Left colon (tissue), 2 donors: ENCODE measurements at regions of chr6 and their contacts with region 1.

Region 1: GRCh38 chr6:150037526-150038201 is 12.3 kb upstream of the RAET1L start:
- DNase-seq: no peak
- ATAC-seq: no peak

Region 2: DNA sequence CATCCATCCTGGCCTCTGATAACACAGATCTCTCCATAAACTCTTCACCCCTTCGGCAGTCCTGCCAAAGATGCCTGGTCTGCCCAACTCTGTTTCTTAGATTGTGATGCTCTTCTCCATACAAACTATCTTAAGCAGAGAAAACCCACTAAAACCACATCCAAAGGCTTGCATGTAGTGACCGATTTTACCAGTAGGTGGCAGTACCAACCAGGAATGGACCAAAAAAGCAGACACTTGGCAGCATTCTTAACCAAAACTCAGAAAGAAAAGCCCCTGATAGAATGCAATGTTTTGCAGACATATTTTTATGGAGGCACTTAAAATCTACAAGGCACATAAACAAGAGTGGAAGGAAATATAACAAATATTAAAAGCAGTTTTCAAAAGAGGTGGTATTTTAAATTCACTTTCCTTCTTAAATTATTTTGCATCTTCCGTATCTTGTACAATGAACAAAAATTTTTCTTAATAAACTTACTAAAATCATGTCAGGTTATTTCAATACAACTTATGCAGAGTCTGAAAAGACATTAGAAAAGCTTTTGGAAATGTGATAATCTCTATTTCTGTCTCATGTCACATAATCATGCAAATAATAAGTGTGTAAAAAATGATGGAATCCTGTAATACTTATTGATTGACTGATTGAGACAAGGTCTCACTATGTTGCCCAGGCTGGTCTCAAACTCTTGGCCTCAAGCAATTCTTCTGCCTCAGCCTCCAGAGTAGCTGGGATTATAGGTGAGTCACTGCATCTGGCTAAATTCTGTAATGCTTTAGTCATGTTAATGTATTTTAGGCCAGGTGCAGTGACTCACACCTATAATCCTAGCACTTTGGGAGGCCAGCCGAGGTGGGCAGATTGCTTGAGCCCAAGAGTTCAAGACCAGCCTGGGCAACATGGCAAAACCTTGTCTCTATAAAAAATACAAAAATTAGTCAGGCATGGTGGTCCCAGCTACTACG is 202.9 kb before region 1 on chr6:
- intact Hi-C with region 1: loop called in 1 of 2 experiments (anchors 10 kb)
- DNase-seq: peak in 1 of 2 donors; percentile 67
- ATAC-seq: no peak

Region 3: GRCh38 chr6:149974825-149975224 is 62.8 kb before region 1 on chr6:
- intact Hi-C with region 1: no loop called
- DNase-seq: no peak
- ATAC-seq: no peak

Region 4: DNA sequence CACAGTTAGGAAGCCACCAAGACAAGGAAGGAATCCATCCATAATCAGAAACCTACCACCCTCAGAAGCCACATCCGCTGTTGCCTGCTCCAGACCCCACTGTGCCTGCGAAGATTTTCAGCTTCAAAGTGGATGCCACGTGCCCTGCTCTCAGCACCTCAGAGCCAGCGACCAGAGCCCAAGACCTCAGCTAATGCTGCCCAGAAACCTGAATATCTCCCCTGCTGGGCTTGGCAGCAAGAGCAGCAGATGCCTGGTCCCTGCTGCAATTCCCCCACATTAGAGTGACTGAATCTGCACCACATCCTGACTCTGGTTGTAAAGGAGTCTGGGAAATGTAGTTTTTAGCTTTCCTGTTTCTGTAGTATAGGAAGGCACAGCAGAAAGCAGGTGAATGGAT is 41.9 kb after region 1 on chr6:
- intact Hi-C with region 1: no loop called
- DNase-seq: no peak
- ATAC-seq: peak; percentile 34

Region 5: GRCh38 chr6:150622941-150623874 is 585.5 kb after region 1 on chr6:
- intact Hi-C with region 1: no loop called
- DNase-seq: no peak
- ATAC-seq: no peak